HepG2 (cell line): ENCODE measurements at regions of chr10 and their contacts with region 1.

Region 1: GRCh38 chr10:62268399-62269114 is at the start of gene RTKN2:
- DNase-seq: peak; percentile 90
- ATAC-seq: peak; percentile 95
- H3K4me3 ChIP-seq: peak within 1 kb of the TSS; percentile 88 to 93 (median 90)
- H3K27ac ChIP-seq: peak within 1 kb of the TSS; percentile 67
- H3K4me1 ChIP-seq: peaks cover 48% of the 10 kb centered on the region
- H3K27me3 ChIP-seq: no peaks in the 10 kb centered on the region
- CTCF ChIP-seq: 0 out of 2 replicates have a peak, but pooled peaks have one; percentile 13
- EP300 ChIP-seq: no peak
- POLR2A ChIP-seq: peak; percentile 57 to 66
- RAD21 ChIP-seq: no peak; the same call in 1 of the 2 replicates
- total RNA-seq, gene RTKN2: 7.0 and 10.8 TPM in 2 replicates

Region 2: DNA sequence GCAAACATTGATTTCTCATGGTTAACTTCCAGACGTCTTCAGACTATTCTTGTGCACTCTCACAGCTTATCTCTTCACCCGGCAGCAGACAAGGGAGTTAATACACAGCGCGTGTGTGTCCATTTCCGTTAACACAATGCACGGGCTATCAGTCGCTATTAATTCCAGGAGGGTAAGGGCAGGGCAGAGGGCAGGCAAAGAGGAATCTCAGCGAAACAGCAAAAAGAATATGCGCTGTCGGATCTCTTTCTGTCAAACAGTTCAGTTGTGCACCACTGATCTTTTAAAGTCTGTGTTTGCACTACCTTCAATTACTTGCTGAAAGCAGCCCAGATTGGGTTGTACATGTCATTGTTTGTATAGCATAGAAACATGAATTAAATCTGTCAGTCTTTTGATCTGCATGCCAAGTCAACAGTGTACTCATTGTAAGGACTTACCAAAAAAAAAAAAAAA is 646.9 kb before region 1 on chr10:
- CTCF ChIA-PET with region 1: no interaction called
- POLR2A ChIA-PET with region 1: no interaction called
- in situ Hi-C with region 1: no loop called
- intact Hi-C with region 1: no loop called
- DNase-seq: peak; percentile 57
- ATAC-seq: no peak
- H3K4me3 ChIP-seq: no peak overlapping the region
- H3K27ac ChIP-seq: no peak overlapping the region
- H3K4me1 ChIP-seq: no peaks in the 10 kb centered on the region
- H3K27me3 ChIP-seq: no peaks in the 10 kb centered on the region; a peak in 1 of 5 replicates
- CTCF ChIP-seq: no peak
- EP300 ChIP-seq: no peak
- POLR2A ChIP-seq: no peak
- RAD21 ChIP-seq: no peak

Region 3: DNA sequence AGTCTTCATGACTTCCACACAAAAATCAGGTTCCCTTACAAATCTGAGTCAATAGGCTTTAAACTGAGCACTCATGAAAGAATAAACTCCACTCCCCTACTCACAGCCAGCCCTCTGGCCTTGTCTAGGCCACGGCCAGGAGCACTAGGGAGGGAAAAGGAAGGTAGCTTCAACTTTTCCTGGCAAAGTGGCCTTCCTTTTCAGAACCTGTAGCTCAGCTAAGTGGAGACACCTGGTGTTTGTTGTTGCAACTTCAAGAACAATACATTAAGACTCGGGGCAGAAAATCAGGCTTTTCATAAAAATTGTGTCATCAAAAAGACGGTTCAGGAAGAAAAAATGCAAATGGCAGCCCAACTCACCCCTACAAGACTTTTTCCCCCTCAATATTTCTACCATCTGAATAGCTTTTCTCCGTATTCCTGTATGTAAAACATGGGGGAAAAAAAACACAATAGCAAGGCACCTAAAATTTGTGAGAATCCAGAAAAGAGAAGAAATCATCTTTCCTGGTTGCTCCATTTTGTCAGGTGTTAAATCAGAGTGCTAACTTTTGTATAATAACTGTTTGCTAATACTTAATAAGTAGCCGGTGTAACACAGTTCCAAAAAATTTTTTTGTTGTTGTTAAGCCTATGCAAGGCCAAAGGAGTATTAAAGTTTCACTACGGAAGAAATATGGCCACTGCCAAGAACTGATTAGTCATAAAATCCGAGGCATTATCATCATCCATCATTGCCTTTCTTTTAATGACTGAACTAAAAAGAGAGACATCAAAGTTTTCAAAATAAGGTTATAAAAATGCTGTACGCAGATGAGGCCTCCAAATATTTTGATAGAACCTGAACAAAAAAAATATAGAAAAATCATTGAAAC is 433.2 kb before region 1 on chr10:
- CTCF ChIA-PET with region 1: no interaction called
- POLR2A ChIA-PET with region 1: interaction called, 3 read pairs
- in situ Hi-C with region 1: no loop called
- intact Hi-C with region 1: loop called (anchors 10 kb)
- DNase-seq: peak; percentile 44
- ATAC-seq: peak; percentile 39; the same call in 1 of the 3 replicates
- H3K4me3 ChIP-seq: no peak overlapping the region
- H3K27ac ChIP-seq: no peak overlapping the region
- H3K4me1 ChIP-seq: peaks cover 66% of the 10 kb centered on the region
- H3K27me3 ChIP-seq: no peaks in the 10 kb centered on the region; a peak in 1 of 5 replicates
- CTCF ChIP-seq: peak; percentile 61
- EP300 ChIP-seq: no peak
- POLR2A ChIP-seq: no peak
- RAD21 ChIP-seq: peak; percentile 58

Region 4: DNA sequence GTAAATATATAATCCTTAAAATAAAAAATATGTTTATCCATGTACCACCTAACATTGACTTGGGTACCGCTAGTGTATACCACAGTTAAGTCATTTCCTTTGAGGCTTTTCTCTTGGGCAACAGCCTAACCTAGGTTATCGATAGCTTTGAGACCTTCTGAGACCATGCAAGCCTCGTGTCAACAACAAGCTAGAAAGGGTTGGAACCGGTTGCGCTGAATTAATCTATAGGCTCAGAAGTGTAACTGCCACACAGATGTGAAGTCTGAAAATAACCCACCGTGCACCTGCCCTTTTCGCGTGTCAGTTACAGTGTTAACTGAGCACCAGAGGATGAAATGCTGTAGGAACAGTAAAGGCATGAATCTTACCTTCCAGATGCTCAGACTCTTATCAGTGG is 307.3 kb before region 1 on chr10:
- CTCF ChIA-PET with region 1: no interaction called
- POLR2A ChIA-PET with region 1: no interaction called
- in situ Hi-C with region 1: no loop called
- intact Hi-C with region 1: loop called (anchors 10 kb)
- DNase-seq: no peak
- ATAC-seq: no peak
- H3K4me3 ChIP-seq: no peak overlapping the region
- H3K27ac ChIP-seq: no peak overlapping the region
- H3K4me1 ChIP-seq: peaks cover 50% of the 10 kb centered on the region
- H3K27me3 ChIP-seq: no peaks in the 10 kb centered on the region
- CTCF ChIP-seq: no peak
- EP300 ChIP-seq: no peak
- POLR2A ChIP-seq: no peak
- RAD21 ChIP-seq: no peak

Region 5: GRCh38 chr10:62424026-62424425 is 155.5 kb after region 1 on chr10:
- CTCF ChIA-PET with region 1: no interaction called
- POLR2A ChIA-PET with region 1: no interaction called
- in situ Hi-C with region 1: no loop called
- intact Hi-C with region 1: loop called (anchors 2 kb)
- DNase-seq: no peak
- ATAC-seq: no peak
- H3K4me3 ChIP-seq: no peak overlapping the region
- H3K27ac ChIP-seq: no peak overlapping the region
- H3K4me1 ChIP-seq: no peaks in the 10 kb centered on the region
- H3K27me3 ChIP-seq: no peaks in the 10 kb centered on the region; a peak in 1 of 5 replicates
- CTCF ChIP-seq: no peak
- EP300 ChIP-seq: no peak
- POLR2A ChIP-seq: no peak
- RAD21 ChIP-seq: no peak

Region 6: DNA sequence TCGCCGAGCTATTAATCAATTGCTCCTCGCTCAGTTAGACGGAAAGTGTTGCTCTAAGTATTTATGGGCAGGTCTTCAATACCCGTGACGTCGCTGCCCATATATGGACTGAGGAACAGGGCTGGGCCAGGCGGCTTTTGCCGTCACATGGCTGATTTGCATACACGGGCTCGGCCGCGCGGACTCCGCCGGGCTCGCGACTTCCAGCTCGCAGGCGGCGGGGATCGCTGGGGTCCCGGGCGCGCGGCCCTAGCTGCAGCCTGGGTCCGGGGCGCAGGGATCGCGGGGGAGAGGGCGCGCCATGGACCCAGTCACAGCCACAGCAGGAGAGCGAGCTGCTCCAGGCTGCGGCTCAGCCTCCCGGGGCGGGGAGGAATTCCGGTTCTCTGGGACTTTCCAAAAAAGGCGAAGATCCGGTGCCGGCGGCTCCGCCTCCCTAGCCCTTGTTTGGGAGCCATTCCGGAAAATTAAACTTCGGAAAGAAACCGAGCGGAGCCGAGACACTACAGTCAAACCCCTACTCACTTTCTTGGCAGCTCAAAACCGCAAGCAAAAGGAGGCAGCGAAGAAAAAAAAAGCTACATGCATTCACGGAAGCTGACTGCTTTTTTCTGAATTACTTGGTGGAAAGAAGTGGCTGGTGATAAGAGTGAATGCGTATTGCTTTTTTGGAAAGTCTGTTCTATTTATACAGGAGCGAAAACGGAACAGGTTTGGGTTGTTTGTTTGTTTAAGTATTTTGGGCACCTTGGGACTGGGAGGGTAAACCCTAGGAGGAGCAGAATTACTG is 548.0 kb after region 1 on chr10 and contains the start of gene EGR2:
- CTCF ChIA-PET with region 1: no interaction called
- POLR2A ChIA-PET with region 1: no interaction called
- in situ Hi-C with region 1: loop called (anchors 25 kb)
- intact Hi-C with region 1: no loop called
- DNase-seq: peak; percentile 86
- ATAC-seq: peak; percentile 84
- H3K4me3 ChIP-seq: peak within 1 kb of the TSS; percentile 61 to 75 (median 65)
- H3K27ac ChIP-seq: no peak within 1 kb of the TSS
- H3K4me1 ChIP-seq: peaks cover 23% of the 10 kb centered on the region
- H3K27me3 ChIP-seq: peaks cover 7 to 23% of the 10 kb centered on the region in 2 experiments; a peak in 4 of 5 replicates
- CTCF ChIP-seq: 0 out of 2 replicates have a peak, but pooled peaks have one; percentile 8
- EP300 ChIP-seq: no peak
- POLR2A ChIP-seq: no peak
- RAD21 ChIP-seq: no peak
- total RNA-seq, gene EGR2: 0.11 TPM in 1 of 2 replicates, not detected in the other